Activated CD4-positive, alpha-beta memory T cell treated with anti-CD3 and anti-CD28 coated beads for 36 hours (primary cell): ENCODE measurements at regions of chr4 and their contacts with region 1.

Region 1: DNA sequence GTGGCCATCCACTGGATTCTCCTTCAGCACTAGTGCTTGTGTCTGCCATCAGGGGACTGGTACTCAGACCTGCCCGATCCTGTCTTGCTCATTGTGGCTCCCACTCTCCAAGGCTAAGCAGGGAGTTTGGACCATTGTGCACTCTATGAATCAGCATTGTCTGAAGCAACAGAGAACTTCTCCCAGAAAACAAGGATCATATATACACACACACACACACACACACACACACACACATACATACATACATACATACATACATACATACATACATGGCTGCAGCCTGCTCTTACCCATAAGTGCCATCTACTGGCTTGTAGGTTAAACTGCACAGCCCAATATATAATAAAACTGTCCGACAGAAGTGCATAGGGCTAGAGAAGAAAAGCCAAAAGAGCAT is 345.3 kb upstream of the LCORL start:
- DNase-seq: no peak
- H3K4me3 Mint-ChIP-seq: no peak overlapping the region
- H3K27ac Mint-ChIP-seq: no peak overlapping the region
- H3K4me1 Mint-ChIP-seq: no peaks in the 10 kb centered on the region
- H3K27me3 Mint-ChIP-seq: no peaks in the 10 kb centered on the region

Region 2: GRCh38 chr4:17552427-17552826 is 814.5 kb before region 1 on chr4:
- CTCF ChIA-PET with region 1: no interaction called
- POLR2A ChIA-PET with region 1: no interaction called
- intact Hi-C with region 1: loop called (anchors 10 kb)
- DNase-seq: no peak
- H3K4me3 Mint-ChIP-seq: no peak overlapping the region
- H3K27ac Mint-ChIP-seq: no peak overlapping the region
- H3K4me1 Mint-ChIP-seq: no peaks in the 10 kb centered on the region
- H3K27me3 Mint-ChIP-seq: no peaks in the 10 kb centered on the region

Region 3: DNA sequence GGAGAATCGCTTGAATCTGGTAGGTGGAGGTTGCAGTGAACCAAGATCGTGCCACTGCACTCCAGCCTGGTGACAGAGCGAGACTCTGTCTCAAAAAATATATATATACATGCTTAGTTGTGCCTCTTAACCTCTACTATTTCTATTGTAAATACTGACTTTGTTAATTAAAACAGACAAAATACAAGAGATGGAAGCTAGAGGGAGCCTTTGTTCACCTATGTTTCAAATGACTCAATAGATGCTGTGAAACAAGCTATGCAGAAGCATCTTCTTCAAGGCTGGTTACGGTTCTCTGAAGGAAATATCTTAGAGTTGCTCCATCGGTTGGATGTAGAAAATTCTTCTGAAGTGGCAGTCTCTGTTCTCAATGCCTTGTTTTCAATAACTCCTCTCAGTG is 549.9 kb before region 1 on chr4:
- CTCF ChIA-PET with region 1: interaction called, 15 read pairs
- POLR2A ChIA-PET with region 1: no interaction called
- intact Hi-C with region 1: loop called (anchors 1 kb)
- DNase-seq: no peak
- H3K4me3 Mint-ChIP-seq: no peak overlapping the region
- H3K27ac Mint-ChIP-seq: no peak overlapping the region
- H3K4me1 Mint-ChIP-seq: peaks cover 15% of the 10 kb centered on the region
- H3K27me3 Mint-ChIP-seq: no peaks in the 10 kb centered on the region

Region 4: DNA sequence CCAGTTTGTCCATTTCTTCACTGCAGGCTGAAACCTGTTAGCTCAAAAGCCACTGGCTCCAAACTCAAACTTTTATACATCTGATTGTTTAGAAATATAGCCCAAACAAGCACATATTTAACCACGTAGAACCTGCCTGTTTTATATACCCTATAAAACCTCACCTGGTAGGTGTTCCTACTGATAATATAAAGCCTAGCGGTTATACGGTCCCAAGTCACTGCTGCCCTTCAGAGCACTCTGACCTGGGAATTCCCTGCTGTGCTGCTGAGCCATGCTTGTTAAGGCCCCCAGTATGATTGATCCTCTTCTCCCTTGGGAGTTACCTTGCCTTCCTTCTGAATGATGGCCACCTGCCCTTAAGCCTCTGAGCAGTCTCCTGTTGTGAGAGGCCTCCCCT is 87.5 kb after region 1 on chr4:
- CTCF ChIA-PET with region 1: no interaction called
- POLR2A ChIA-PET with region 1: no interaction called
- intact Hi-C with region 1: no loop called
- DNase-seq: no peak
- H3K4me3 Mint-ChIP-seq: no peak overlapping the region
- H3K27ac Mint-ChIP-seq: no peak overlapping the region
- H3K4me1 Mint-ChIP-seq: no peaks in the 10 kb centered on the region
- H3K27me3 Mint-ChIP-seq: no peaks in the 10 kb centered on the region